H1 (cell line): ENCODE measurements at regions of chr14 and their contacts with region 1.

Region 1: DNA sequence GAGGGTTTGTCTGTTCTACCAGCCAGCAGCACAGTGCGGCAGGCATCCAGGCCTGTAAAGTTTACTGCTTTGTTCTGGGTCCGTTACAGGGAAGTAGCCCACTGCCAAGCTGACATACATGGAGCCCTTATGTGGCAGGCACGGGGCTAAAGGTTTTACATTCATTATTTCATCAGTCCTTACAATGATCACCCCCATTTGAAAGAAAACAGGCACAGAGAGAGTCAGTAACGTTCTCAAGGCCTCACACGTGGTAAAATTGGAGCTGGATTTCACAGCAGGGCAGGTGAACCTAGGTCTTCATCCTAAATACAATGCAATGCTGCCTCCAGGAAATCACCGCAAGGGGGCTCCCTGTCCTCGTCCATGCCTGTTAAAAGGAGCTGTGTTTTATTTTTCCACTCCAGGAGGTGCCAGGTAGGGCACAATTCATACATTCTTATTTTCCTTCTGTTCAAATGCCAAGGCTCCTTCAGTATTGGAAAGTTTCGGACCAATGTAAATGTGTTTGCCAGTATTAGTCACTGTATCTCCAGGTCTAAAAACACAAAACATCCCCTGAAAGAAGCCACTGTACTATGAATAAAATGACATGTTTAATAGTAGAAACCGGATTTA is 172.2 kb upstream of the GZMB start:
- DNase-seq: peak; percentile 57 to 91
- H3K4me3 ChIP-seq: no peak overlapping the region
- H3K27ac ChIP-seq: no peak overlapping the region
- H3K4me1 ChIP-seq: peaks cover 0 to 3% (median 0%) of the 10 kb centered on the region in 4 experiments; a peak in 1 of 7 replicates
- H3K27me3 ChIP-seq: no peaks in the 10 kb centered on the region; a peak in 1 of 7 replicates
- CTCF ChIP-seq: peak; percentile 78 to 91 (median 90)
- EP300 ChIP-seq: no peak
- POLR2A ChIP-seq: no peak
- RAD21 ChIP-seq: peak; percentile 96 to 97

Region 2: DNA sequence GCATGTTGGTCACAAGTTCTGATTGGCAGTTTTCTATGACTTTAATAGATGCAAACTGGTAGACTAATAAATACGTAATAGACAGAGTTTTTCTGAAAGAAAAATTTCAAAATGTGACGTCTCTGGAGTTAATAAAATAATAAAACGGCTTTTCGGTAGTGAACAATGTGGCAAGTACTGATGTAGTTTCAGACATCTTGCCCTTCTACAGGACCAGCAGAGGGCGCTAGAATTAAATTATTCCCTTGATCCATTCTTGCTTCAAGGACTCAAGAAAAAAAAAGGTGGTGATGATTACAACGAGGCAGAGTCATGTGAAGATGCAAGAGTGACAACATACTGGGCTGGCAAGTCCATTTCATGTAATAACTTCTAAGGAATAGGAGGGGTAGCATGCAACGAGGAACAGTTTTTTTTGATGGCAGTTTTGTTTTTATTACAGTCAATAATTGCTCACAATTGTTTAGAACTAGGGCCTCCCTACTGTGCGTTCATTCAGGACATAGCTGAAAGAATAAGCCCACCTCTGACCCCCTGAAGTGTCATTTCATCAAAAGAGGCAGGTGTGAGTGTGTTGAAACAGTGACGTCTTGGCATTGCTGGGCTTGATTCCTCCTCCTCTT is 71.2 kb before region 1 on chr14:
- CTCF ChIA-PET with region 1: interaction called, 10 read pairs
- POLR2A ChIA-PET with region 1: no interaction called
- DNase-seq: no peak
- H3K4me3 ChIP-seq: no peak overlapping the region
- H3K27ac ChIP-seq: no peak overlapping the region
- H3K4me1 ChIP-seq: peaks cover 0 to 3% (median 0%) of the 10 kb centered on the region in 4 experiments; a peak in 3 of 7 replicates
- H3K27me3 ChIP-seq: no peaks in the 10 kb centered on the region
- CTCF ChIP-seq: peak in 2 of 3 experiments; percentile 61 to 65; a peak in 3 of 4 replicates
- EP300 ChIP-seq: no peak
- POLR2A ChIP-seq: no peak
- RAD21 ChIP-seq: peak; percentile 70 to 75

Region 3: DNA sequence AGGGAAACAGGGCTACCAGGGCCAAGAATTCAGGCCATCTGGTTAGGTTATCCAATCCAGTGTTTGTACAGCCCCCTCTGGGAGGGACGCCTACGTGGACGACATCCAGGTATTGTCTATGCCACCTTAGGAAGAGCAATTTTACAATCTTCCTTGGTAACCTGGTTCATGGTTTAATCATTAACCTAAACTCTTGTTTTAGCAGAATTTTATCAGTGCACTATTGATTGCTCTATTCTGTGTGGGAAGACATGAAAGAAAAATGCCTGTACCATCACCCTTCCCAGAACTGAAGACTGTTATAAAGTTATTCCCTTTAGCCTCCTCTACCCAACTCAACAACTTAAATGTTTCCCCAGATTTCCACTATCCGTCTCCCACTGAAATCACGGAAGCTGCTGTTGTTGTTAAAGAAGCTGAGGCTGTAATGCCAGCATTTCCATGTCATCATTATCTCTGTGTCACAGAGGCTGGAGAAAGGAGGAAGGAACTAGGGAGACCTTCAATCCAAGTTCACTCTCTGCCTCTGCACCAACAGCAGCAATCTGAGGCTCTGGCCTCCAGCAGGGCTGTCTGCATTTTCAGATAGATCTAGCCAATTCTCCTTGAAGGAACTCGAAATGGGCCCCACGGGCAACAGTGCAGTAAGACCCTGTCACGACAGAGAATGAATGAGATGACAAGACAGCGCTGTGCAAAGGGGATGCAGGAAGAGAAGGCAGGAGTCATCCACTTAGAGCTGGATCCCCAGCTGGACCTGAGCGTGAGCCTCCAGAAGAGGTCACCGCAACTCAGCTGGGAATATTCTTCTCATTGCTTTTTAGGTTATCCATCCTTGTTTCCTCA is 11.3 kb after region 1 on chr14:
- CTCF ChIA-PET with region 1: interaction called, 18 read pairs
- POLR2A ChIA-PET with region 1: interaction called, 3 read pairs
- DNase-seq: no peak
- H3K4me3 ChIP-seq: no peak overlapping the region
- H3K27ac ChIP-seq: no peak overlapping the region
- H3K4me1 ChIP-seq: no peaks in the 10 kb centered on the region
- H3K27me3 ChIP-seq: no peaks in the 10 kb centered on the region
- CTCF ChIP-seq: peak; percentile 43 to 61 (median 60); a peak in 3 of 4 replicates
- EP300 ChIP-seq: no peak
- POLR2A ChIP-seq: no peak
- RAD21 ChIP-seq: peak; percentile 74 to 77

Region 4: DNA sequence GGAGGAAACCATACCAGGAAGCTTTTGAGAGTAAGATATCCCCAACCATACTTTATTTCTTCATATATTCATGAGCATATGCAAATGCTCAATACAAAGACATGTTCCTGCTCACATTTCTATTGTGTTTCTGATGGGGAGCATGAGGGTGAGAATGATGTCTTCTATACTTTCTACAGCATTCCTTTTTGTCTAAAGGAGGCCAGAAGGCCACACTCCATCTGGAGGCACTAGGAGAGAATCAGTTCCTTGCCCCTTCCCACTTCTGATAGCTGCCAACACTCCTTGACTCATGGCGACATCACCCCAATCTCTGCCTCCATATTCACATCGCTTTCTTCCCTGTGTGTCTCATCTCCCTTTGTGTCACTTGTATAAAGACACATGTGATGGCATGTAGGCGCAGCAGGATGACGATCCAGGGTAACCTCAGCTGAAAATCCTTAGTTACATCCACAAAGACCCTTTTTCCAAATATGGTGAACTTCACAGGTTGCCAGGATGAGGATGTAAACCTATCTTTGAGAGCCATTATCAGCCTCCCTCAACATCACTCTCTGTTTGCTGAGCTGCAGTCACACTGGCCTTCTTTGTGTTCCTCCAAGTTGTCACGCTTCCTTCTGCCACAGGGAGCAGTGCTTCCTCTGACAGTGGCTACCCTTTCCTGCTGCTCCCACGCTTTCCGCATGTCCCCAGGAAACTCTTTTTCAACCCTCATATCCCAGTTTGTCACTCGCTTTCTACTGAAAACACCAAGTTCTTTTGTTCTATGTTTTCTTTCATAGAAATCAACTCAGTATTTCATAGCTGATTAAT is 146.9 kb after region 1 on chr14:
- CTCF ChIA-PET with region 1: interaction called, 11 read pairs
- POLR2A ChIA-PET with region 1: no interaction called
- DNase-seq: no peak
- H3K4me3 ChIP-seq: peak overlapping the region in 1 of 4 experiments; percentile 2; a peak in 1 of 8 replicates
- H3K27ac ChIP-seq: peak overlapping the region; percentile 76
- H3K4me1 ChIP-seq: peaks cover 0 to 9% (median 7%) of the 10 kb centered on the region in 4 experiments; a peak in 3 of 7 replicates
- H3K27me3 ChIP-seq: no peaks in the 10 kb centered on the region
- CTCF ChIP-seq: peak; percentile 26 to 71 (median 59); a peak in 3 of 4 replicates
- EP300 ChIP-seq: no peak
- POLR2A ChIP-seq: no peak
- RAD21 ChIP-seq: peak; percentile 49 to 55

Region 5: DNA sequence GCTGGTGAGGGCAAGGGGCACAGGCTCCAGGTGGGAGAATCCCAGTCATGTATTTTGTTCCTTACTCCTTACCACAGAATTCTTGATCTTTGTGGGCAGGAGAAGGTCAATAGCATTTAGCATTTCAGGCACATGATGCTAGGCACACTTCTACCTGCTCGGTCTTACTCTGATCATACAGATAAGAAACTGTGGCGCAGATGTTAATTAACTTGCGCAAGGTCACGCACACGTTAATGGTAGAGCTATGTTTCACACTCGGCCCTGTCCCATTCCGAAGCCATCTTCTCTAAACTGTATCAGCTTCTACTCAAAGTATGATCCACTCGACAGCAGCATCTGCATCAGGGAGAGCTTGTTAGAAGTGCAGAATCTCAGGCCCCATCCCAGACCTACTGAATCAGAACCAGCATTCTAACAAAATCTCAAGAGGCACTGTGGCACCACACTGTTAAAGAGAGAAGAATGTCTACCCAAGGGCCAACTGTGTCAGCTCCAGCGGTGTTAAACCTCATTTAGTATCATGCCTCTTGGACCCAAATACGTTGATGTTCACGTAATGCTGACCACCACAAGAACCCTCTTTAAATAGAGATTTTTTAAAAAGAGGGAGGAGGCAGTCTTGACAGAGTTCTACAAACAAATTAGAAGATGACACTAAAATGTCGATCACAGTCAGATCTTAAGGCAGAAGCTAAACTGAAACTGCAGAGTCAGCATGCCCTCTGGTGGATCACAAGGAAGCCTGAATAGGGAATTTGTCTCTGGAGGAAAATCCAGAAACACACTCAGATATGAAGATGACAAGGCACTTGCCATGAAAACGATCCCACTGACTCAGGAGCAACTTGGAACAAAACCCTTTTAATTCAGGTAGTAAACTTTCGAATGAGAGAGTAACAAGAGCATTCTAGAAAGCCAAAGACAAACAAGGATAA is 236.5 kb after region 1 on chr14:
- CTCF ChIA-PET with region 1: interaction called, 80 read pairs
- POLR2A ChIA-PET with region 1: no interaction called
- DNase-seq: no peak
- H3K4me3 ChIP-seq: no peak overlapping the region
- H3K27ac ChIP-seq: no peak overlapping the region
- H3K4me1 ChIP-seq: peaks cover 0 to 2% (median 0%) of the 10 kb centered on the region in 4 experiments; a peak in 1 of 7 replicates
- H3K27me3 ChIP-seq: peaks cover 0 to 3% (median 0%) of the 10 kb centered on the region in 4 experiments; a peak in 2 of 7 replicates
- CTCF ChIP-seq: peak in 2 of 3 experiments; percentile 73 to 87; a peak in 3 of 4 replicates
- EP300 ChIP-seq: no peak
- POLR2A ChIP-seq: no peak
- RAD21 ChIP-seq: peak; percentile 93 to 94

Region 6: DNA sequence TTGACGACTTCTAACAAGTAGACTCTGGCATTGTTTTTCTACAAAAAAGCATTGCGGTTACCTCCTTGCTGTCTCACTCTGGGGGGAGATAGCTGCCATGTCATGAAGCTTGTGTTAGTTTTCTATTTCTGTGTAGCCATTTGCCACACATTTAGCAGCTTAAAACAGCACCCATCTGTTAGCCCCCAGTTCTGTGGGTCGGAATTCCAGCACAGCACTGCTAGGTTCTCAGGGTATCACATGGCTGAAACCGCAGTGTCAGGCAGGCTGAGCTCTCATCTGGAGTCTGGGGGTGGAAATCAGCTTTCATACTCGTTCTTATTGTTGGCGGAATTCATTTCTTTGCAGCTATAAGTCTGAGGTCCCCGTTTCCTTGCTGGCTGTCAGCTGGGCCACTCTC is 263.7 kb after region 1 on chr14:
- CTCF ChIA-PET with region 1: interaction called, 12 read pairs
- POLR2A ChIA-PET with region 1: no interaction called
- DNase-seq: no peak
- H3K4me3 ChIP-seq: no peak overlapping the region
- H3K27ac ChIP-seq: no peak overlapping the region
- H3K4me1 ChIP-seq: peaks cover 0 to 4% (median 3%) of the 10 kb centered on the region in 4 experiments; a peak in 3 of 7 replicates
- H3K27me3 ChIP-seq: no peaks in the 10 kb centered on the region
- CTCF ChIP-seq: no peak
- EP300 ChIP-seq: no peak
- POLR2A ChIP-seq: no peak
- RAD21 ChIP-seq: no peak

Region 7: GRCh38 chr14:25237845-25238244 is 431.7 kb after region 1 on chr14:
- CTCF ChIA-PET with region 1: interaction called, 29 read pairs
- POLR2A ChIA-PET with region 1: no interaction called
- DNase-seq: peak; percentile 7 to 55
- H3K4me3 ChIP-seq: no peak overlapping the region
- H3K27ac ChIP-seq: no peak overlapping the region
- H3K4me1 ChIP-seq: peaks cover 0 to 3% (median 0%) of the 10 kb centered on the region in 4 experiments; a peak in 1 of 7 replicates
- H3K27me3 ChIP-seq: no peaks in the 10 kb centered on the region; a peak in 2 of 7 replicates
- CTCF ChIP-seq: peak in 2 of 3 experiments; percentile 44 to 57; a peak in 2 of 4 replicates
- EP300 ChIP-seq: no peak
- POLR2A ChIP-seq: no peak
- RAD21 ChIP-seq: peak; percentile 73 to 78